H1 (cell line): ENCODE measurements at regions of chr2 and their contacts with region 1.

Region 1: GRCh38 chr2:170984079-170984478 is 55.0 kb downstream of the GORASP2 start:
- DNase-seq: no peak
- H3K4me3 ChIP-seq: no peak overlapping the region; a peak in 1 of 8 replicates
- H3K27ac ChIP-seq: no peak overlapping the region
- H3K4me1 ChIP-seq: peaks cover 0 to 6% (median 2%) of the 10 kb centered on the region in 4 experiments; a peak in 2 of 7 replicates
- H3K27me3 ChIP-seq: no peaks in the 10 kb centered on the region
- CTCF ChIP-seq: no peak
- EP300 ChIP-seq: no peak
- POLR2A ChIP-seq: no peak; a peak in 1 of 3 replicates
- RAD21 ChIP-seq: no peak

Region 2: DNA sequence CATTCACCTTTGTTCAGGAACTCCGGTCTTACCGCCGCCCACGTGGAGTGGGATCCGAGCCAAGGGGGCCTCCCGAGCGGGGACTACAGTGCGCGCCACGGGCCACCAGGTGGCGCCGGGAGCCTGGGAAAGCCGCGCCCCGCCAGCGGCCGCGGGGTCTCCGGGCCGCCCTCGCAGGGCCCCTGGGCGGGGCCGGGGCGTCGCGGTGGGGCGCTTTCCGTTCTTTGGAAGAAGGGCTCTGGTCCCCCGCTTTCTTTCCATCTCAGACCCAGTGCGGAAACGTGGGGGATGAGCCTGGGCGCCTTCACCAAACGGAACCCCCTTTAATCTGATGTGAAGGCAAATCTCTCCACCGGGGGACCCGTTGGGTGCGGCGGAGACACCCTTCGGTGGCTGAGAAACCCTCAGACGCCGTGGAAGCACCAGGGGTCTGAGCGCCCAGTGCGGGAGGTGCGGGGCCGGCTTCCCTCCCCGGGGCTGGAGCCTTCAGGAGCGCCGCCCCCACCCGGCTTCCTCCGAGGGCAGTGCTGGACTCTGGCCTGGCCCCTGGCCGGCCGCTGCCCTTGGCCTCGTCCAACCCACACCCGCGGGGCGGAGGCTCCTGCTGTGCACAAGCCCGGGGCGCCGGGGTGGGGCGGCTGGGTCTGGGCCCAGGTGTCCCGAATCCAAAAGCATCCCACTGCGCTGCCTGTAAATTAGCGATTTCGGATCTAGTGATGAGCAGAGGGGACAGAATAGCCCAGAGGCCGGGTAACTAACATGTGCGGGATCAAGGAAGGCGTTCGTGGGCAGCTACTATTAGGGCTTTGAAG is 10.4 kb before region 1 on chr2:
- CTCF ChIA-PET with region 1: interaction called, 49 read pairs
- POLR2A ChIA-PET with region 1: interaction called, 17 read pairs
- DNase-seq: peak; percentile 27 to 93
- H3K4me3 ChIP-seq: peak overlapping the region; percentile 18 to 58 (median 42); a peak in 6 of 8 replicates
- H3K27ac ChIP-seq: no peak overlapping the region; the same call in 1 of the 2 replicates
- H3K4me1 ChIP-seq: peaks cover 0 to 10% (median 3%) of the 10 kb centered on the region in 4 experiments; a peak in 6 of 7 replicates
- H3K27me3 ChIP-seq: no peaks in the 10 kb centered on the region
- CTCF ChIP-seq: peak; percentile 83 to 93 (median 83)
- EP300 ChIP-seq: peak in 1 of 2 experiments; percentile 60; a peak in 1 of 3 replicates
- POLR2A ChIP-seq: 0 out of 3 replicates have a peak, but pooled peaks of 1 of the 2 experiments have one; percentile 40
- RAD21 ChIP-seq: peak; percentile 89 to 96

Region 3: GRCh38 chr2:171025214-171025613 is 41.1 kb after region 1 on chr2:
- CTCF ChIA-PET with region 1: no interaction called
- POLR2A ChIA-PET with region 1: no interaction called
- DNase-seq: no peak
- H3K4me3 ChIP-seq: no peak overlapping the region
- H3K27ac ChIP-seq: no peak overlapping the region
- H3K4me1 ChIP-seq: no peaks in the 10 kb centered on the region
- H3K27me3 ChIP-seq: no peaks in the 10 kb centered on the region
- CTCF ChIP-seq: no peak
- EP300 ChIP-seq: no peak
- POLR2A ChIP-seq: no peak
- RAD21 ChIP-seq: no peak

Region 4: DNA sequence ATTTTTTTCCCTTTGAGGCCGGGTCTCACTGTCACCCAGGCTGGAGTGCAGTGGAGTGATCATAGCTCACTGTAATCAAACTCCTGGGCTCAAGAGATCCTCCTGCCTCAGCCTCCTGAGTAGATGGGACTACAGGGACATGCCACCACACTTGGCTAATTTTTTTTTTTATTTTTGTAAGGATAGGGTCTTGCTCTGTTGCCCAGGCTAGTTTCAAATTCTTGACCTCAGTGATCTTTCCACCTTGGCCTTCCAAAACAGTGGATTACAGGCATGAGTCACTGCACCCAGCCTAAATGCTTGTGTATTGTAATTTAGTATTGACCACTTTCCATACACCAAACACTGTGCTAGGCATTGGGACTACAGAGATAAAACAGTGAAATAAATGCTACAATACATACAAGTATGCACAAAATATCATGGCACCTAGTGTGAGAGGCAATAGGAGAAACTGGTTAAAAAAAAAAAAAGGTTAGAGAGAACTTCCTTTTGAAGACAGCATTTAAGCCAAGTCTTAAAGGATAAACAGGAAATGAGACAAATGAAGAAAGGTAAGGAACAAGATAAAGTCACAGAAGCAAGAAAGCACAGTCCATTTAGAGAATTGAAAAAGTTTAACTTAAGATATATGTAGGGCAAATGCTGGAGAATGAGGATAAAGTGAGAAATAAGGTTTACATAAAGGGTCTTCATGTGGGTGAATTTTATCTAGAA is 58.3 kb after region 1 on chr2:
- CTCF ChIA-PET with region 1: no interaction called
- POLR2A ChIA-PET with region 1: no interaction called
- DNase-seq: no peak
- H3K4me3 ChIP-seq: no peak overlapping the region
- H3K27ac ChIP-seq: no peak overlapping the region
- H3K4me1 ChIP-seq: peaks cover 0 to 10% (median 2%) of the 10 kb centered on the region in 4 experiments; a peak in 2 of 7 replicates
- H3K27me3 ChIP-seq: no peaks in the 10 kb centered on the region
- CTCF ChIP-seq: no peak
- EP300 ChIP-seq: no peak
- POLR2A ChIP-seq: no peak
- RAD21 ChIP-seq: no peak